ENCODE measurements at regions of chr20 and their contacts with region 1.

Region 1: DNA sequence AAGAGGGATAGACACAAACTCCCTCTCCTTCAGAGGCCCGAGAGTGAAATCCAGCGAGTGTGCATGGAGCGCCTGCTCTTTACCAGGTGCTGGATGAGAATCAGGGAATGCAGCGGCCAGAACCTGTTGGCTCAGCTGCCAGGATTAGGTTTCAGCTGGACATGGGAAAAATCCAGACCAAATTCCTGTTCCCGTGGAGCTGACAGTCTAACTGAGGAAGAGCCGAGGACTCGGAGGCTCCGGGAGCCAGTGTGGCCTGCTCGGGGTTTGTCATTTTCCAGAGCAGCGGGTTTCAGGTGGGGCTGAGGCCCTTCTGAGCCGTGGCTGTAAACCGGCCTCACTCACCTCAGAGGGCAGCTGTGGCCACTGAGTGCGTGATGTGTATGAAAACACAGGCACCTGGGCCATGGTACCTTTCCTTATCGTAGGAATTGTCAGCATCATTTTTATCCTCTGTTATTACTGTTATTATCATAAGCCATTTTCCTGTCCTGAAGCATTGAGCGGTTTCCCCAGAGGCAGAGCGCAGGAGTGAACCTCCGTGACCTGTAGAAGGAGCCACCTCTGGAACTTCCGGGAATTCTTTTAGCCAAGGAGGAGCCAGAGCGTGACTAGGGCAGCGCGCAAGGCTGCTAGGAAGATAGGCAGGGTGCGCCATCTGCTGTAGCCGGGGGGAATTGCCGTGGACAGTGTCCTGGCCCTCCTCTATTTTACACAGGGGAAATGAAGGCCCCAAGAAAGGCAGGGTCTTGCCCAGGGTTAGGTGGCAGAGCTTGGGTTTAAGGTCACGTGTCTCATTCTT is 27.3 kb downstream of the PKIG start:
- DNase-seq: peak; percentile 85 to 98
- H3K4me3 ChIP-seq: no peak overlapping the region
- H3K27ac ChIP-seq: no peak overlapping the region
- H3K4me1 ChIP-seq: peaks cover 0 to 4% (median under 1%) of the 10 kb centered on the region in 4 experiments; a peak in 3 of 7 replicates
- H3K27me3 ChIP-seq: no peaks in the 10 kb centered on the region
- CTCF ChIP-seq: peak; percentile 96 to 99 (median 96)
- EP300 ChIP-seq: no peak
- POLR2A ChIP-seq: no peak
- RAD21 ChIP-seq: peak; percentile 99

Region 2: GRCh38 chr20:44326391-44327159 is 283.1 kb before region 1 on chr20:
- CTCF ChIA-PET with region 1: no interaction called
- POLR2A ChIA-PET with region 1: no interaction called
- DNase-seq: peak in 1 of 2 experiments; percentile 68
- H3K4me3 ChIP-seq: peak overlapping the region in 3 of 4 experiments; percentile 7 to 53 (median 29); a peak in 5 of 8 replicates
- H3K27ac ChIP-seq: no peak overlapping the region
- H3K4me1 ChIP-seq: peaks cover 0 to 10% (median 4%) of the 10 kb centered on the region in 4 experiments; a peak in 6 of 7 replicates
- H3K27me3 ChIP-seq: no peaks in the 10 kb centered on the region; a peak in 1 of 7 replicates
- CTCF ChIP-seq: no peak
- EP300 ChIP-seq: peak; percentile 5 to 48; a peak in 2 of 3 replicates
- POLR2A ChIP-seq: 0 out of 3 replicates have a peak, but pooled peaks of 1 of the 2 experiments have one; percentile 32
- RAD21 ChIP-seq: no peak

Region 3: GRCh38 chr20:44495802-44496481 is 113.8 kb before region 1 on chr20:
- CTCF ChIA-PET with region 1: interaction called, 10 read pairs
- POLR2A ChIA-PET with region 1: no interaction called
- DNase-seq: no peak
- H3K4me3 ChIP-seq: no peak overlapping the region
- H3K27ac ChIP-seq: no peak overlapping the region
- H3K4me1 ChIP-seq: no peaks in the 10 kb centered on the region
- H3K27me3 ChIP-seq: no peaks in the 10 kb centered on the region
- CTCF ChIP-seq: no peak
- EP300 ChIP-seq: no peak
- POLR2A ChIP-seq: no peak
- RAD21 ChIP-seq: no peak

Region 4: GRCh38 chr20:44509762-44510161 is 100.0 kb before region 1 on chr20:
- CTCF ChIA-PET with region 1: interaction called, 23 read pairs
- POLR2A ChIA-PET with region 1: no interaction called
- DNase-seq: no peak
- H3K4me3 ChIP-seq: no peak overlapping the region
- H3K27ac ChIP-seq: no peak overlapping the region
- H3K4me1 ChIP-seq: no peaks in the 10 kb centered on the region
- H3K27me3 ChIP-seq: no peaks in the 10 kb centered on the region
- CTCF ChIP-seq: no peak
- EP300 ChIP-seq: no peak
- POLR2A ChIP-seq: no peak
- RAD21 ChIP-seq: no peak

Region 5: GRCh38 chr20:44576297-44576696 is 33.4 kb before region 1 on chr20:
- CTCF ChIA-PET with region 1: interaction called, 16 read pairs
- POLR2A ChIA-PET with region 1: no interaction called
- DNase-seq: no peak
- H3K4me3 ChIP-seq: no peak overlapping the region
- H3K27ac ChIP-seq: no peak overlapping the region
- H3K4me1 ChIP-seq: peaks cover 0 to 3% (median 0%) of the 10 kb centered on the region in 4 experiments; a peak in 1 of 7 replicates
- H3K27me3 ChIP-seq: no peaks in the 10 kb centered on the region
- CTCF ChIP-seq: peak in 2 of 3 experiments; percentile 29 to 32; a peak in 3 of 4 replicates
- EP300 ChIP-seq: no peak
- POLR2A ChIP-seq: no peak
- RAD21 ChIP-seq: peak; percentile 28 to 46

Region 6: GRCh38 chr20:44590980-44591778 is 18.5 kb before region 1 on chr20:
- CTCF ChIA-PET with region 1: interaction called, 18 read pairs
- POLR2A ChIA-PET with region 1: no interaction called
- DNase-seq: no peak
- H3K4me3 ChIP-seq: no peak overlapping the region
- H3K27ac ChIP-seq: no peak overlapping the region
- H3K4me1 ChIP-seq: peaks cover under 1 to 9% (median 2%) of the 10 kb centered on the region in 4 experiments
- H3K27me3 ChIP-seq: no peaks in the 10 kb centered on the region
- CTCF ChIP-seq: no peak
- EP300 ChIP-seq: no peak
- POLR2A ChIP-seq: no peak
- RAD21 ChIP-seq: no peak

Region 7: DNA sequence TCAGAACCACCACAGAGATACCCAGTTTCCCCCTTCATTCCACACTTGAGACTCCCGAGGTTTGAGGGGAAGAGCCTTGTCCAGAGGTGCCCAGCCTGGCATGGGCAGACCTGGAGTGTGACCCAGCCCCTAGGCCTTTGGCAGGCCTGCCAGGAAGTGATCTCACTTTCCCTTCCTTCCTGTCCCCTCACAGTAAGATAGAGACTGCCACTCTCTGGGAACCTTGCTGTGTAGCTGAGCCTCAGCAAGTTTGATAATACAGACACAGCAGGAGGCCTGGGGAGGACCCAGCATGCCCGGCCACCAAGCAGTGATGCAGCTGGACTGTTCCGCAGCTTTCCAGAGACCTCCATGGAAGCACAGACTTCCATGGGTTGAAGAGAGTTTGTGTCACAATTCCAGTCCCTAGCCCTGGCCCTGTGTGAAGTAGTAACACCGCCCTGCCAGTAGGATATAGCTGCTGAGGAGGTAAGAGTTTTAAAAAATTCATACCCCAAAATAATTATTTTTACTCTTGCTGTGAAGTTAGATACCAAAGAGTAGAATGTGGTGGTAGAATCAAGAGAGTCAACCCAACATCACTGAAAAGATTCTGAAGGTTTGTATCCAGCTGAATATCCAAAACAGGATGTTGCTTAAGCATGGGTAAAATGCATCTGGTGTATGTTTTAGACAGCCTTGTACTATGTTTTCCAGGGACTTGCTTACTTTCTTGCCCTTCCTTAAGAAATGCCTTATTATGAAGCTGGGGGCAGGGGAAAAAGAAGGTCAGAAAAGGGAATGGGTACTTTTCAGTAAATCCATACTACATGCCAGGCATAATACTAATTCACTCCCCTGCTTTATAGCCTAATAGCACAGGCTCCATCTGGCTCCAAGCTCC is 11.0 kb before region 1 on chr20:
- CTCF ChIA-PET with region 1: interaction called, 31 read pairs
- POLR2A ChIA-PET with region 1: interaction called, 4 read pairs
- DNase-seq: no peak
- H3K4me3 ChIP-seq: no peak overlapping the region
- H3K27ac ChIP-seq: no peak overlapping the region
- H3K4me1 ChIP-seq: peaks cover 12 to 24% (median 17%) of the 10 kb centered on the region in 4 experiments
- H3K27me3 ChIP-seq: no peaks in the 10 kb centered on the region; a peak in 1 of 7 replicates
- CTCF ChIP-seq: peak in 1 of 3 experiments; percentile 20; a peak in 1 of 4 replicates
- EP300 ChIP-seq: no peak
- POLR2A ChIP-seq: no peak
- RAD21 ChIP-seq: no peak

Measured in H1 (cell line).